ENCODE measurements at regions of chr5 and their contacts with region 1.

Region 1: GRCh38 chr5:154179846-154180710 is 10.5 kb upstream of the GALNT10 start:
- DNase-seq: peak; percentile 45 to 53
- H3K4me3 ChIP-seq: no peak overlapping the region
- H3K4me3 Mint-ChIP-seq: no peak overlapping the region
- H3K27ac Mint-ChIP-seq: no peak overlapping the region
- H3K4me1 ChIP-seq: no peaks in the 10 kb centered on the region
- H3K4me1 Mint-ChIP-seq: no peaks in the 10 kb centered on the region
- H3K27me3 ChIP-seq: no peaks in the 10 kb centered on the region
- H3K27me3 Mint-ChIP-seq: peaks cover 9% of the 10 kb centered on the region
- CTCF ChIP-seq: peak; percentile 64 to 86

Region 2: DNA sequence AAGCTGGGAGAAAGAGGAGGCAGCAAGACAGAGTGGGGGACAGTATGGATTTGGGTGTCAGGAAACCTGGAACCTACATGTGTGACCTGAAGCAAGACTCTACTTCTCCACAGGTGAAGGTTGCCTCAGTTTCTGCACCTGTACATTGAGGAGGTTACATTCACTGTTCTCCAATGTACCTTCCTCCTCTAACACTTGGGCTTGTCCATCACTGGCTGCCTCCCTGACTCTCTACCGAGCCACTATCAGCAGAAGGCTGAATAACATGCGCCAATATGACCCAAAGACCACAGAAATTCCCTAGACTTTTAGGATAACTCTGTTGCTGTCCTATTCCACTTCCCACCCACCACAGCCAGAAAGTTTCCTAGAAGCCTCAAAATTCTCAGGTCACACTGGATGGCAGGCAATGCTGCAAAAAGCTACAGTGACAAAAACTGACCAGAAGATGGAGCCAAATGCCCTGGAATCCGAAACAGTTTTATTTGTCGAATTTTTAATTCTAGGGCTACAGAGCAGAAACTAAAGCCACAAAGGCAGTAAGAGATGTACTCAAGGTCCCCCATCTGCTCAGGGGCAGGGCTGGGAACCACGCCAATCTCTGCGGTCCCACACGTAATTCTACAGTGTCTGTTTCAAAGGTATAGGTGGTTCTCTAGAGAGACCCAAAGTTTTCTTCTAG is 205.8 kb before region 1 on chr5:
- CTCF ChIA-PET with region 1: interaction called, 6 read pairs
- POLR2A ChIA-PET with region 1: no interaction called
- intact Hi-C with region 1: loop called (anchors 1 kb)
- DNase-seq: peak in 1 of 2 experiments; percentile 52
- H3K4me3 ChIP-seq: no peak overlapping the region
- H3K4me3 Mint-ChIP-seq: no peak overlapping the region
- H3K27ac Mint-ChIP-seq: no peak overlapping the region
- H3K4me1 ChIP-seq: no peaks in the 10 kb centered on the region
- H3K4me1 Mint-ChIP-seq: no peaks in the 10 kb centered on the region
- H3K27me3 ChIP-seq: no peaks in the 10 kb centered on the region
- H3K27me3 Mint-ChIP-seq: peaks cover 11% of the 10 kb centered on the region
- CTCF ChIP-seq: peak; percentile 80 to 81

Region 3: GRCh38 chr5:154118893-154119336 is 61.2 kb before region 1 on chr5:
- CTCF ChIA-PET with region 1: no interaction called
- POLR2A ChIA-PET with region 1: no interaction called
- intact Hi-C with region 1: loop called (anchors 2 kb)
- DNase-seq: peak in 1 of 2 experiments; percentile 18
- H3K4me3 ChIP-seq: no peak overlapping the region
- H3K4me3 Mint-ChIP-seq: no peak overlapping the region
- H3K27ac Mint-ChIP-seq: no peak overlapping the region
- H3K4me1 ChIP-seq: peaks cover 5% of the 10 kb centered on the region; the same call in 1 of the 2 replicates
- H3K4me1 Mint-ChIP-seq: no peaks in the 10 kb centered on the region
- H3K27me3 ChIP-seq: no peaks in the 10 kb centered on the region
- H3K27me3 Mint-ChIP-seq: peaks cover 16% of the 10 kb centered on the region
- CTCF ChIP-seq: peak in 1 of 2 experiments; percentile 19

Region 4: GRCh38 chr5:154162539-154163151 is 17.4 kb before region 1 on chr5:
- CTCF ChIA-PET with region 1: no interaction called
- POLR2A ChIA-PET with region 1: no interaction called
- intact Hi-C with region 1: no loop called
- DNase-seq: no peak
- H3K4me3 ChIP-seq: no peak overlapping the region
- H3K4me3 Mint-ChIP-seq: no peak overlapping the region
- H3K27ac Mint-ChIP-seq: no peak overlapping the region
- H3K4me1 ChIP-seq: no peaks in the 10 kb centered on the region
- H3K4me1 Mint-ChIP-seq: no peaks in the 10 kb centered on the region
- H3K27me3 ChIP-seq: no peaks in the 10 kb centered on the region
- H3K27me3 Mint-ChIP-seq: peaks cover 29% of the 10 kb centered on the region
- CTCF ChIP-seq: no peak